ENCODE measurements at regions of chr11 and their contacts with region 1.

Region 1: DNA sequence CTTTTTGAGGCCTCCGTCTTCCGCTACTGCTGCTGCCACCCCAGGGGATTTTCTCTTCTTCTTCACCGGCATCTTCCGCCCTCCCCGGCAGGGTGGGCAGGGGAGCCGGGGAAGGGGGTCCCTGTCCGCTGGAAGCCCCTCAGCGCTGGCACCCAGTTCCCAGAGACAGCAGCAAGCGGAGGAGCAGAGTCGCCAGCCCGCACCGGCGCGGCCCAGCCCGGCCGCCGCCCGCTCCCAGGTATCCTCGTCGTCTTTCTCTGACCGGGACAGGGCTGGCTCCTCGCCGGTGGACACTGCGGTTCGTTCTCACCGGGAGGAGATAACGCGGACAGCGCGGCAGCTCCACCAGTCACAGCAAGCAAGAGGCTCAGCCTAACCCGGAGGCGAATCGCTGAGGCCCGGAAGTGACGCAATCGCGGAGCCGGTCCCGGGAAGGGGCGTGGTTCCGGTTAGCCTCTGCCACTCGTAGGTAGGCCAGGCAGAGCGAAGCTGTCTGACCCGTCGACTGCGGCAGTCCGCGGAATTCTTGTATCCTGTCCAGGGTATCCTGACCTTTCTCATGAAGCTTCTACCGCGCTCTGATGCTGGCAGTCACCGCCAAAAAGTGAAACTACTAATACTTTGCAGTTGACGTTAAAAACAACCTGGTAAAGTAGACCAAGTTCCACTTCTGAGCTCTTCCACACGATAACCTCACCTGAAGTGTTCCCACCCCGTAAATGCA is at the start of gene DCUN1D5:
- DNase-seq: peak; percentile 88 to 97 (median 94)
- ATAC-seq: peak; percentile 95 to 96
- H3K4me3 Mint-ChIP-seq: peak within 1 kb of the TSS; percentile 88 to 98 (median 94)
- H3K27ac Mint-ChIP-seq: peak within 1 kb of the TSS; percentile 95 to 99 (median 97)
- H3K4me1 Mint-ChIP-seq: peaks cover 11 to 37% (median 29%) of the 10 kb centered on the region in 4 donors
- H3K27me3 Mint-ChIP-seq: peaks cover 17 to 38% (median 24%) of the 10 kb centered on the region in 5 donors
- polyA plus RNA-seq, gene DCUN1D5: 20.0 to 22.9 (median 21.9) TPM

Region 2: GRCh38 chr11:102620818-102621561 is 471.0 kb before region 1 on chr11:
- POLR2A ChIA-PET with region 1: no interaction called
- DNase-seq: no peak
- ATAC-seq: no peak
- H3K4me3 Mint-ChIP-seq: no peak overlapping the region
- H3K27ac Mint-ChIP-seq: no peak overlapping the region
- H3K4me1 Mint-ChIP-seq: no peaks in the 10 kb centered on the region
- H3K27me3 Mint-ChIP-seq: peaks cover 0 to 6% (median 2%) of the 10 kb centered on the region in 5 donors

Region 3: GRCh38 chr11:103108933-103109817 is 17.2 kb after region 1 on chr11 and contains the start of gene DYNC2H1:
- POLR2A ChIA-PET with region 1: interaction called, 58 read pairs
- DNase-seq: peak; percentile 81 to 92 (median 88)
- ATAC-seq: peak; percentile 85 to 91
- H3K4me3 Mint-ChIP-seq: peak within 1 kb of the TSS; percentile 88 to 99 (median 96)
- H3K27ac Mint-ChIP-seq: peak within 1 kb of the TSS; percentile 84 to 98 (median 96)
- H3K4me1 Mint-ChIP-seq: peaks cover 5 to 16% (median 10%) of the 10 kb centered on the region in 4 donors
- H3K27me3 Mint-ChIP-seq: peaks cover 0 to 9% (median 5%) of the 10 kb centered on the region in 5 donors
- polyA plus RNA-seq, gene DYNC2H1: 0.54 to 0.99 (median 0.65) TPM

Measured in naive thymus-derived CD8-positive, alpha-beta T cell (primary cell).